ENCODE measurements at regions of chr11 and their contacts with region 1.

Region 1: DNA sequence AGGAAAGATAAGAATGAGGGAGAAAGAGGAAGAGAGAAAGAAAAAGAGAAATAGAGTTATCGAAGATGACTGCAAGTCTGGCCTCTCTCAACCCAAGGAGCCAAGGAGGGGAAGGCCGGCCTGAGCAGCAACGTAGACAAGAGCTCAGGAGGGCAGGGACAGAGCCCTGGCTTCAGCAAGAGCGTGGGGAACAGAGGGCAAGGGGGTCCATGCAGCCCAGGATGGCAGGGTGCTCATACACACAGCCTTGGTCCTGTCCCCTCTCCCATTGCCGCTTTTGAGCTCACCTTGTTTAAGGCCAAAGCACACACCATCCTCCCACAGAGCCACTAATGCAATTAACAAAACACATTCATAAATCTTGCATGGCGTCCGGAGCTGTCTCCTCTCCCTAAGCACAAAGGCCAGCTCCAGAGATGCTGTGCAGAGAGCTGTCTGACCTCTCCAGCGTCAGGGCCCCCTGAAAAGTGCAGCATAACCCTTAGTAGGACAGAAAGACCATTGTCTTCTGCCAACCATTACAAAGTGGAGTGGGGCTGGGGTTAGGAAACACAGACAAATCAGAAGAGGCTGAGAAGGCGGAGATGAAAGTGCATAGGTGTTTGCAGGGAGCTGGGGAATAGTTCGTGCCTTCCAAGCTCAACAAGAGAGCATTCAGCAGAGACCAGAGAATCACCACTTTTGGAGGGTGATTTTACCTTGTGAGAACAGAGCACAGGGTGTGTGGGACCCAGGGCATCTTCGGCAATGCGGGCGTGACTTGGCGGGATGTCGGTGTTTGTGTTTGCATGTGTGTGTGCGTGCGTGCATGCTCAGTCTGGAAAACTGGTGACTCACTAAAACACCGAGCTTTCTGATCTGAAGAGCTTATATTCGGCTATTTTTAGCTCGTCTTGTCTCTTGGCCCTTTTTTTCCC is 28.2 kb upstream of the JAM3 start:
- DNase-seq: no peak
- ATAC-seq: no peak
- H3K4me3 ChIP-seq: no peak overlapping the region
- H3K27ac ChIP-seq: peak overlapping the region in 3 of 10 donors; percentile 13 to 21 (median 15)
- H3K4me1 ChIP-seq: peaks cover 15 to 60% (median 41%) of the 10 kb centered on the region in 9 donors
- H3K27me3 ChIP-seq: peaks cover 0 to 17% (median 0%) of the 10 kb centered on the region in 7 donors
- CTCF ChIP-seq: no peak

Region 2: DNA sequence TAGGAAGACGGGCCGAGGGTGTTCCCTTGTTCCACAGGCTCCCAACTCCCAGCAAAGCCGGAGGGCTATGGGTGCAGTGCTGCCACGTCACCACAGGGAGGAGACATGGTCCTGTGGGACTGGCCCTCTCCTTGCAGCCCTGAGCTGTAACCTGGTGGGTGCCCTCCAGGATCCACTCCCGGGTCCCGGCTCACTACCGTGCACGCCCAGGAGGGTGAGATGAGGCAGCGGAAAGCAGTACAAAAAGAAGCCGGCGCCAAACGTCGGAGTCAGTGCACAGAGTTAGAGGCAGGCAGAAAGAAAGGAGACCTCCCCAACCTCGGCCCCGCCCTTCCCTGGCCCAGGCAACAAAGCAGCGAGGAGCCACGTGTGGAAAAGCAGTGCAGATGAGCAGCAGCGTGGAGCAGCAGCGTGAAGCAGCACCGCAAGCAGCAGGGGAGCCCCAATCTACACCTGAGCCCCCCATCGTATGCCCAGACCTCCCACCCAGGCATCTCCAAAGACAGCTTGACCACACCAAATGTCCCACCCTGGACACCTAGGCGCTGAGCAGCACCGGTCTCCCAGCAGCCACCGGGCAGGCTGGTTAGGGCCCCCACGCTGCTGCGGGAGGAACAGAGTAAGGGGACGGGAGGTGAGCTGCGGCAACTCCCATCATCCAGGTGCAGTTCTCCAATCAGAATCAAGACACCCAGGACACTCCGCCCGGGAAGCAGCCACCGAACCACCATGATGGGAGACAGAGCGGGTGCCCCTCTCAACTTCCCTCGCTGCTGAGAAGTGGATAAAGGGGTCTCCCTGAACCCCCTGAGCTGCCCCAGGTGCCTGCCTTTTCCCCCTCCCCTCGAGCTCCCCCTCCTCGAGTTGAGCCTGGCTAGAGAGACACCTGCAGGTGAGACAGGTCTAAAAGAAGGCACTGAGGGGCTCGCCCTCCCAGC is 112.7 kb before region 1 on chr11:
- intact Hi-C with region 1: loop called in 8 of 10 experiments (anchors 5 kb)
- DNase-seq: peak; percentile 57 to 67
- ATAC-seq: peak; percentile 74 to 88 (median 82)
- H3K4me3 ChIP-seq: peak overlapping the region in 5 of 10 donors; percentile 13 to 41 (median 17)
- H3K27ac ChIP-seq: peak overlapping the region in 1 of 10 donors; percentile 20
- H3K4me1 ChIP-seq: peaks cover 5 to 22% (median 14%) of the 10 kb centered on the region in 9 donors
- H3K27me3 ChIP-seq: no peaks in the 10 kb centered on the region
- CTCF ChIP-seq: peak; percentile 67 to 91 (median 86)

Region 3: GRCh38 chr11:133934599-133935550 is 105.8 kb before region 1 on chr11:
- intact Hi-C with region 1: loop called in 1 of 10 experiments (anchors 5 kb)
- DNase-seq: peak; percentile 52 to 81
- ATAC-seq: peak; percentile 68 to 93 (median 86)
- H3K4me3 ChIP-seq: no peak overlapping the region
- H3K27ac ChIP-seq: peak overlapping the region in 5 of 10 donors; percentile 9 to 61 (median 40)
- H3K4me1 ChIP-seq: peaks cover 0 to 27% (median 19%) of the 10 kb centered on the region in 9 donors
- H3K27me3 ChIP-seq: no peaks in the 10 kb centered on the region
- CTCF ChIP-seq: no peak

Region 4: GRCh38 chr11:134957540-134958335 is 917.1 kb after region 1 on chr11:
- intact Hi-C with region 1: no loop called
- DNase-seq: no peak
- ATAC-seq: peak in 1 of 8 donors; percentile 38
- H3K4me3 ChIP-seq: no peak overlapping the region
- H3K27ac ChIP-seq: no peak overlapping the region
- H3K4me1 ChIP-seq: no peaks in the 10 kb centered on the region
- H3K27me3 ChIP-seq: peaks cover 0 to 13% (median 4%) of the 10 kb centered on the region in 7 donors
- CTCF ChIP-seq: no peak

Measured in heart right ventricle (tissue), 16 donors.